Kidney (tissue), 22 donors: ENCODE measurements at regions of chr7 and their contacts with region 1.

Region 1: DNA sequence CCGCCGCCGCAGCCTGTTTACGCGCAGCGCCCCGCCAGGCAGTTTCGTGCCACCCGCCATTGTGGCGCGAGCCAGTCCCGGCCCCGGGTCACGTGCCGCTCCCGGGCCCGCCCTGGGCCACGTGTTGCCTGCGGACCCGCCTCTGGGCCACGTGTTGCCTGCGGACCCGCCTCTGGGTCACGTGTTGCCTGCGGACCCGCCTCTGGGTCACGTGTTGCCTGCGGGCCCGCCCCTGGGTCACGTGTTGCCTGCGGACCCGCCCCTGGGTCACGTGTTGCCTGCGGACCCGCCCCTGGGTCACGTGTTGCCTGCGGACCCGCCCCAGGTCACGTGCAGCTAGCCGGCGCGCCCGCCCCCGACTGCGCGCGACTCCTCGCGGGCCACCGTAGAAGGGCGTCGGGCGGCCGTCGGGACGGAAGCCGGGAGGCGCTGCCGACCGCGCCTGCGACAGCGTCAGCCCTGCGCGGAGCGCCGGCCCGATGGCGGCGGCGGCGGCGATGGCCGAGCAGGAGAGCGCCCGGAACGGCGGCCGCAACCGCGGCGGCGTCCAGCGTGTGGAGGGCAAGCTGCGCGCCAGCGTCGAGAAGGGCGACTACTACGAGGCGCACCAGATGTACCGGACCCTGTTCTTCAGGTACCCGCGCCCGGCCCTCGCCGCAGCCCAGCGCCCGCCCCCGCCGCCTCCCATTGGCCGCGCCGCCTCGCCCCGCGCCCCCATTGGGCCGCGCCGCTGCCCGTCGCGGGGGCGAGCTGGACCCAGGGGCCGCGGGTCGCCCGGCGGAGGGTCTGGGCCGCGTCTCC is at the start of gene GET4:
- DNase-seq: peak; percentile 95 to 100 (median 98)
- H3K4me3 ChIP-seq: peak within 1 kb of the TSS; percentile 60 to 74 (median 73)
- H3K27ac ChIP-seq: peak within 1 kb of the TSS; percentile 29 to 86
- H3K4me1 ChIP-seq: peaks cover 0 to 24% (median 9%) of the 10 kb centered on the region in 3 donors
- H3K27me3 ChIP-seq: no peaks in the 10 kb centered on the region
- CTCF ChIP-seq: no peak
- total RNA-seq, gene GET4: 44.8 TPM

Region 2: DNA sequence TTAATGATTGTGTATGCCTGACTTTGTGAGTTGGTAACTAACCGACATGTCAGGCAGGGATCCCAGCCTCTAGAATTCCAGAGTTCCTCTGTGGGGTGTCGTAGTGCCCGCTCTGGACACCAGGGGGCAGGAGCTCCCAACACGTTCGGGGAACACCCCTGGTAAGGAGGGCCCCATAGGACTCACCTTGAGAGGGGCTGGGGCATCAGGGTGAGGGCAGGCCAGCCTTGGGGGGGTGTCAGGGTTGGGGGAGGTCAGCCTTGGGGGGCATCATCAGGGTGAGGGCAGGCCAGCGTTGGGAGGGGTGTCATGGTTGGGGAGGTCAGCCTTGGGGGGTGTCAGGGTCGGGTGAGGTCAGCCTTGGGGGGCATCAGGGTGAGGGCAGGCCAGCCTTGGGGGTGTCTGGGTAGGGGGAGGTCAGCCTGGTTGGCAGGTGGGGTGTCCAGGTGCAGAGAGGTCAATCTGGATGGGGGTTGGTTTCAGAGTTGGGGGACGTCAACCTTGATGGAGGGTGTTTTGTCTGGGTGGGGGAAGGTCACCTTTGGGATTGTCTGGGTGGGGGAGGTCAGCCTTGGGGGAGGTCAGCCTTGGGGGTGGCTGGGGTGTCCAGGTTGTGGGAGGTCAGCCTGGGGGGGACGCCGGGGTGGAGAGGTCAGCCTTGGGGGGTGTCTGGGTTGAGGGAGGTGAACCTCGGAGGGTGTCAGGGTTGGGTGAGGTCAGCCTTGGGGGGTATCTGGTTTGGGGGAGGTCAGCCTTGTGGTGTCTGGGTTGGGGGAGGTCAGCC is 89.7 kb before region 1 on chr7:
- intact Hi-C with region 1: loop called (anchors 10 kb)
- DNase-seq: peak; percentile 61 to 86 (median 71)
- H3K4me3 ChIP-seq: no peak overlapping the region
- H3K27ac ChIP-seq: no peak overlapping the region
- H3K4me1 ChIP-seq: no peaks in the 10 kb centered on the region
- H3K27me3 ChIP-seq: no peaks in the 10 kb centered on the region
- CTCF ChIP-seq: peak; percentile 90